Colonic mucosa (tissue), 4 donors: ENCODE measurements at regions of chr12 and their contacts with region 1.

Region 1: GRCh38 chr12:6062757-6063735 is 61.4 kb downstream of the VWF start:
- DNase-seq: peak; percentile 48
- H3K4me3 ChIP-seq: no peak overlapping the region
- H3K27ac ChIP-seq: no peak overlapping the region
- H3K4me1 ChIP-seq: no peaks in the 10 kb centered on the region
- H3K27me3 ChIP-seq: no peaks in the 10 kb centered on the region
- CTCF ChIP-seq: peak; percentile 97

Region 2: GRCh38 chr12:5889381-5890047 is 173.5 kb before region 1 on chr12:
- intact Hi-C with region 1: no loop called
- DNase-seq: no peak
- H3K4me3 ChIP-seq: no peak overlapping the region
- H3K27ac ChIP-seq: no peak overlapping the region
- H3K4me1 ChIP-seq: no peaks in the 10 kb centered on the region
- H3K27me3 ChIP-seq: no peaks in the 10 kb centered on the region
- CTCF ChIP-seq: no peak

Region 3: DNA sequence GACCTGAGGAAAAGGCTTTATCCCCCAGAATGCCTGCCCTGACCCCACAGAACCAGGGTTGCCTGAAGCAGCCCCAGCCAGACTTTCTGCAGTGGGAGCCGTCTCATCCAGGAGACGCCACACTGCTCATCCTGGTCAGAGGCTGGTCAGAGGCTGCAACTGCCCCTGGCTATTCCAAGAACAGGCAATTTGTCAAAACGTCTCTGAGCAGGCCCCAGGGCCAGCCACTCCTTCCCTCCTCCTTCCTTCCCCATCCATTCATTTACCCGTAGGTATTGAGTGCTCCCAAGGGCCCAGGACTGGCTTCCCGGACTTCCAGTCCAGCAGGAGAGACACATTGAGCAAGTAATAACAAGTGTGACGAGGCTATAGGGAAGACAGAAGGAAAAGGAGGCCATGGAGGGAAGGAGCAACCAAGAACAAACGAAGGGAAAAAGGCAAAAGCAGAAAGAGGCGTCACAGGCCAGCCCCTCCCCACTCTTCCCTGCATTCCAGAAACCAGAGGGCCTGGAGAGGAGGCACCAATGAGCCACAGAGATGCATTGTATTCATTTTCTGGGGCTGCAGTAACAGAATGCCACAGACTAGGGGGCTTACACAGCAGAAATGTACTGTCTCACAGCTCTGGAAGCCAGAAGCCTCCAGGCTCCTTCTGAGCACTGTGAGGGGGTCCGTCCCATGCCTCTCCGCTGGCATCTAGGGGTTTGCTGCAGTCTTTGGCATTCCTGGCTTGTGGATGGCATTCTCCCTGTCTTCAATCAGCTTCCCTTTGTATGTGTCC is 116.1 kb after region 1 on chr12:
- intact Hi-C with region 1: loop called (anchors 5 kb)
- DNase-seq: no peak
- H3K4me3 ChIP-seq: no peak overlapping the region
- H3K27ac ChIP-seq: no peak overlapping the region
- H3K4me1 ChIP-seq: peaks cover 19% of the 10 kb centered on the region
- H3K27me3 ChIP-seq: no peaks in the 10 kb centered on the region
- CTCF ChIP-seq: no peak

Region 4: GRCh38 chr12:6187948-6188793 is 125.1 kb after region 1 on chr12:
- intact Hi-C with region 1: loop called (anchors 5 kb)
- DNase-seq: no peak
- H3K4me3 ChIP-seq: no peak overlapping the region
- H3K27ac ChIP-seq: no peak overlapping the region
- H3K4me1 ChIP-seq: peaks cover 4% of the 10 kb centered on the region
- H3K27me3 ChIP-seq: no peaks in the 10 kb centered on the region
- CTCF ChIP-seq: no peak